GM10248 (cell line): ENCODE measurements at regions of chr11 and their contacts with region 1.

Region 1: GRCh38 chr11:88447281-88447680 is 109.7 kb upstream of the CTSC start:
- DNase-seq: no peak
- CTCF ChIP-seq: no peak

Region 2: GRCh38 chr11:88435189-88435814 is 12.0 kb before region 1 on chr11:
- CTCF ChIA-PET with region 1: interaction called, 5 read pairs
- POLR2A ChIA-PET with region 1: interaction called, 10 read pairs
- DNase-seq: peak; percentile 70
- CTCF ChIP-seq: no peak

Region 3: GRCh38 chr11:88631497-88631896 is 184.2 kb after region 1 on chr11:
- CTCF ChIA-PET with region 1: no interaction called
- POLR2A ChIA-PET with region 1: no interaction called
- DNase-seq: no peak
- CTCF ChIP-seq: no peak